Activated naive CD4-positive, alpha-beta T cell treated with anti-CD3 and anti-CD28 coated beads for 36 hours (primary cell): ENCODE measurements at regions of chrX and their contacts with region 1.

Region 1: DNA sequence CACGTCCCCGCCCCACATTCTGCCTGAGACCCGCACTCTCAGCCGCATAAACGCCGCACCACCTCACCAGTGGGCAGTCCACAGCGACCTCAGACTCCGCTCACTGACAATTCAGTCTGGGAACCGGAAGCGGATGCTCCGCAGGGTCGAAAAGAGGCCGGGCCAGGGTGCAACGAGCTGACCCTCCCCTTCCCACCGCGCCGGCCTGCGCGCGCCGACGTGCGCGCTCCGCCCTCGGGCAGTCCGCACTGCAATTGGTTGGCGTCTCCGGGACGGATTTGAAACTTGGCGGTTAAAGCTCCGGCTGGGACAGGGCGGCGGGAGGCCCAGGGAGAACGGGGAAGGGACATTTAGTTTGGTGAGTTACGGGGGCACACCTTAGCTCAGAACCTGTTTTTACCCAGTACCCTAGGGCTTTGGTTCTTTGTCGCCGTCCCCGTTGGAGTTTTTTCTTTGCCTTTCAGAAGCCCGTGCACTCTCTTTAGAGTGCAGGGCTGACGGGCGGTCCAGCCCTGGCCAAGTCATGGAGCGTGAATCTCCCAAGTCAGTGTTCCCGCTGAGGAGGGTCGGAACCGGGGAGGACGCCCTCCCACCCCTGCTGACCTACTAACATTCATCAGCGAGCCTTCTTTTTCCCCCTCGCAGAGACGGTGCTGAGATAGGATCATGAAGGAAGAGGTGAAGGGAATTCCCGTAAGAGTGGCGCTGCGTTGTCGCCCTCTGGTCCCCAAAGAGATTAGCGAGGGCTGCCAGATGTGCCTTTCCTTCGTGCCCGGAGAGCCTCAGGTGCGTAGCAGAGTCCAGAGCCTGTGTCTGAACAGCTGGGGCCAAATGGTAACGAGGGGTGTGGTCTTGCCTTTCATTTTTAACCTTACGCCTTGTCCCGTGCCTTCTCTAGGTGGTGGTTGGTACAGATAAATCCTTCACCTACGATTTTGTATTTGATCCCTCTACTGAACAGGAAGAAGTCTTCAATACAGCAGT is at the starts of genes KIF4A and PDZD11:
- DNase-seq: peak; percentile 86
- H3K4me3 Mint-ChIP-seq: peak within 1 kb of the TSS; percentile 90
- H3K27ac Mint-ChIP-seq: peak within 1 kb of the TSS; percentile 83
- H3K4me1 Mint-ChIP-seq: peaks cover 5% of the 10 kb centered on the region
- H3K27me3 Mint-ChIP-seq: no peaks in the 10 kb centered on the region
- total RNA-seq, gene KIF4A: 27.1 to 29.6 TPM
- total RNA-seq, gene PDZD11: 24.5 to 25.9 TPM

Region 2: DNA sequence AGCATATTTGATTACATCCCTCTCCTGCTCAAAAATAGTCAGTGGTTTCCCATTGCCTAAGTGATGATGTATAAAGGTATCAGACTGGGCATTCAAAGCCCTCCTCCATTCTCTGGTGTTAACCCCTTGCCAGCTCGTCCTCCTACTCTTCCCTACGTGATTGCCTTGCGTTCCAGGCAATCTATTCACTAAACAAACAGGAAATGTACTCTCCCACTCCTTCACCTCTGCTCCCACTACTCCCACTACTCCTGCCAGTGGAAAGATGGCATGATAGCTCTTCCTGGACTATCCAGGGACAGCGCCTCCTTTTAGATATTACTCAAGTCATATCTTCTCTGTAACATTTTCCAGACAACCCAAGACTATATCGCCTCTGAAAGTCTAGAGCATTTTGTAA is 107.0 kb before region 1 on chrX:
- CTCF ChIA-PET with region 1: no interaction called
- intact Hi-C with region 1: no loop called
- DNase-seq: no peak
- H3K4me3 Mint-ChIP-seq: no peak overlapping the region
- H3K27ac Mint-ChIP-seq: no peak overlapping the region
- H3K4me1 Mint-ChIP-seq: no peaks in the 10 kb centered on the region
- H3K27me3 Mint-ChIP-seq: no peaks in the 10 kb centered on the region

Region 3: DNA sequence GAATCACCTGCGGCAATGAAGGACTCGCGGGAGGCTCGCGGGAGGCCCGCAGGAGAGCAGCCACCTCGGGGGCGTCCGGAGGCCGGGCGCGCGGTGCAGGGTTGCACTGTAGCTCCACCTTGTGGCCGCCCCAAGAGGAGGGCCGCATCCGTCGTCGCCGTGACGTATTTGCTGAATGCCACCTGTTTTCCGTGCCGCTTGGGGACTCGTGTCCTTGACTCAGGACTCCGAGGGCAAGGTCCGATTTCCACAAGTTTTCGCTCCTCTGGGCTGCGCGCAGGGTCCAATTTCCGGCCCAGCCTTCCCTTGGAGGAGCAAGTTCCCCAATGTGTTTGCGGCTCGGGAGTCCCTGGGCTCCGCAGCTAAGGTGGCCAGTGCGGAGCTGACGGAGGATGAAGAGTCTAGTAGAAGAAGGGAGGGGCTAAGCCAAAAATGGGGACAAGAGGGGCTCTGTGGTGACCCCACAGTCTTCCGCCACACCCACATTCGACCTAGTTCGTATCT is 143.8 kb after region 1 on chrX:
- CTCF ChIA-PET with region 1: interaction called, 3 read pairs
- intact Hi-C with region 1: loop called (anchors 2 kb)
- DNase-seq: peak; percentile 80
- H3K4me3 Mint-ChIP-seq: peak overlapping the region; percentile 84
- H3K27ac Mint-ChIP-seq: peak overlapping the region; percentile 50
- H3K4me1 Mint-ChIP-seq: peaks cover 7% of the 10 kb centered on the region
- H3K27me3 Mint-ChIP-seq: peaks cover 11% of the 10 kb centered on the region